Activated CD8-positive, alpha-beta T cell treated with anti-CD3 and anti-CD28 coated beads for 36 hours (primary cell): ENCODE measurements at regions of chr9 and their contacts with region 1.

Region 1: DNA sequence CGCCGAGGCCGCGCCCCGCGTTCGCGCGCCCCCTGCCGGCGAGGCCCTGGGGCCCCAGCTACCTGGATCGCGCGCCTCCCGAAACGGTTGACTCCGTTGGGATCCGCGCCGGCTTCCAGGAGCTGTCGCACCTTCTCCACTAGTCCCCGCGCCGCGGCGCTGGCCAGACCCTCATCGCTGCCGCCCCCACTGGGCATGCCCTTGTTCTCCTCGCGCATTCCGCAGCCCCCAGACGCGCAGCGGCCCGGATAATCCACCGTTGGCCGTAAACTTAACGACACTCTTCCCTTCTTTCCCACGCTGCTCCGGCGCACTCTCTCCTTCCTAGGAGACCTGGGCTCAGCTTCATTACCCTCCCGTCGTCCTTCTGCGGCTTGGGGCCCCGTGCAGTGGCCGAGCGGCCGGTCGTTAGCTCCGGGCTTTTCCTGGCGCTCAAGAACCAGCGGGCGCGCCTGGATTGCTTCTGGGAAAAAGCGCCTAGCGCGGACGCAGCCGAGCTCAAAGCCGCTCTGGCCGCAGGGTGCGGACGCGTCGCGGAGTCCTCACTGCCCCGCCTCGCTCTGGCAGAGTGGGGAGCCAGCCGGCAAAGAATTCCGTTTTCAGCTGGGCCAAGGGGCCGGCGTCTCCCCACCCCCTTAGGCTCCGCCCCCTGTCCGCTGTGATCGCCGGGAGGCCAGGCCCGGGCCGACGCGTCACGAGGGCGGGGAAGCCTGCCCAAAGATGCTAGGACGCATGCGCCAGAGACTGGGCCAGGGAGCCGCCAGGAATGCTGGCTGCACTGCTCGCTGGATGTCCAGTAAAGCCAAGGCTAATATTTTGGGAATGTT is at the start of gene CDKN2B:
- DNase-seq: peak; percentile 71
- ATAC-seq: peak; percentile 89
- H3K4me3 Mint-ChIP-seq: peak within 1 kb of the TSS; percentile 72
- H3K27ac Mint-ChIP-seq: no peak within 1 kb of the TSS
- H3K4me1 Mint-ChIP-seq: peaks cover 21% of the 10 kb centered on the region
- H3K27me3 Mint-ChIP-seq: peaks cover 55% of the 10 kb centered on the region
- CTCF ChIP-seq: peak; percentile 78
- total RNA-seq, gene CDKN2B: not detected

Region 2: DNA sequence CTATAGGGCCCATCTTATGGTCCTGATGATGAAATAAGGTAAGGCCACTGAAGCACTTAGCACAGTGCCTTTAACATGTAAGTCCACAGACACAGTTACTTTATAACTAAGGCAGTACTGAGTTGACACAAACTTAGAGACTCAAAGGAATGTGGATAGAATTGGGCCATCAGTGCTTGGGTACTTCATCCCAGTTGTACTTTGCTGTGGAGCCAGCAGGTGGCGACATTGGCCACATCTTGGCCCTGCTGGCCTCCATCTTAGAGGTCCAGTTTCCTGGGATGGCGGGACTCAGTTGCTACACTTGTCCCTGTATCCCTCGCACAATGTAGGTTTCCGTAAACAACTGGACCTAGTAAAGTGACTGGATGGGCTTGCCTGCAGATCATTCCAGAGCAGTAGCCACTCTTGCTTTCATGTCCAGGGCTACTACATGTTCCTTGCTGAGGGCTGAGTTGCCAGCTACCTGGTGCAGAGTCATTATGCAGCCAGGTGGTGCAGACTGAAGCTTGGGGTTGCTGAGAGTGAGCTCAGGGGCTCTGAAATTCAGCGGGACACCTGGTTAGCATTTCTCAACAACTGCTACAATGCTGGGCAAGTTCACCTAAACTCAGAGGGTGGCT is 195.9 kb before region 1 on chr9:
- CTCF ChIA-PET with region 1: interaction called, 93 read pairs
- POLR2A ChIA-PET with region 1: interaction called, 5 read pairs
- intact Hi-C with region 1: loop called (anchors 1 kb)
- DNase-seq: peak; percentile 72
- ATAC-seq: peak; percentile 71
- H3K4me3 Mint-ChIP-seq: no peak overlapping the region
- H3K27ac Mint-ChIP-seq: peak overlapping the region; percentile 69
- H3K4me1 Mint-ChIP-seq: peaks cover 42% of the 10 kb centered on the region
- H3K27me3 Mint-ChIP-seq: no peaks in the 10 kb centered on the region
- CTCF ChIP-seq: peak; percentile 85

Region 3: DNA sequence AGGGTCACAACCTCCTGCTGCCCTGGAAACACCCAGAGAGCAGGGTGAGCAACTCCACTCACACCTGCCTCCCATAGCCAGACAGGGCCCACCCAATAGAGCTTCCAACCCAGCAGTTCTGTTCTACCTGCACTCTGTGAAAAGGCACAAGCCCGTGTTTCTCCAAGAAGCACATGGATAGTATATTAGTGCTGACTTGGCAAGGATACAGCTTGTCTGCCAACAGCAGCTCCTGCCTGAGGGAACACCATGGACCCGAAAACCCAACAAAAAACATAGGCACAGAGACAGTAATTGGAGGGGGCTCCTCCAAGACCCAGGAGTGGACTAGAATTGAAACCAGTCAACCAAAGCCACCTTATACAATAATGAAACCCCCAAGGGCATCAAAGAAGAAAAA is 63.3 kb before region 1 on chr9:
- CTCF ChIA-PET with region 1: no interaction called
- POLR2A ChIA-PET with region 1: no interaction called
- intact Hi-C with region 1: no loop called
- DNase-seq: no peak
- ATAC-seq: no peak
- H3K4me3 Mint-ChIP-seq: no peak overlapping the region
- H3K27ac Mint-ChIP-seq: no peak overlapping the region
- H3K4me1 Mint-ChIP-seq: no peaks in the 10 kb centered on the region
- H3K27me3 Mint-ChIP-seq: peaks cover 25% of the 10 kb centered on the region
- CTCF ChIP-seq: no peak

Region 4: GRCh38 chr9:21974548-21975409 is 34.2 kb before region 1 on chr9:
- CTCF ChIA-PET with region 1: interaction called, 37 read pairs
- POLR2A ChIA-PET with region 1: interaction called, 3 read pairs
- intact Hi-C with region 1: loop called (anchors 5 kb)
- DNase-seq: peak; percentile 79
- ATAC-seq: peak; percentile 83
- H3K4me3 Mint-ChIP-seq: peak overlapping the region; percentile 78
- H3K27ac Mint-ChIP-seq: no peak overlapping the region
- H3K4me1 Mint-ChIP-seq: peaks cover 15% of the 10 kb centered on the region
- H3K27me3 Mint-ChIP-seq: peaks cover 78% of the 10 kb centered on the region
- CTCF ChIP-seq: no peak

Region 5: DNA sequence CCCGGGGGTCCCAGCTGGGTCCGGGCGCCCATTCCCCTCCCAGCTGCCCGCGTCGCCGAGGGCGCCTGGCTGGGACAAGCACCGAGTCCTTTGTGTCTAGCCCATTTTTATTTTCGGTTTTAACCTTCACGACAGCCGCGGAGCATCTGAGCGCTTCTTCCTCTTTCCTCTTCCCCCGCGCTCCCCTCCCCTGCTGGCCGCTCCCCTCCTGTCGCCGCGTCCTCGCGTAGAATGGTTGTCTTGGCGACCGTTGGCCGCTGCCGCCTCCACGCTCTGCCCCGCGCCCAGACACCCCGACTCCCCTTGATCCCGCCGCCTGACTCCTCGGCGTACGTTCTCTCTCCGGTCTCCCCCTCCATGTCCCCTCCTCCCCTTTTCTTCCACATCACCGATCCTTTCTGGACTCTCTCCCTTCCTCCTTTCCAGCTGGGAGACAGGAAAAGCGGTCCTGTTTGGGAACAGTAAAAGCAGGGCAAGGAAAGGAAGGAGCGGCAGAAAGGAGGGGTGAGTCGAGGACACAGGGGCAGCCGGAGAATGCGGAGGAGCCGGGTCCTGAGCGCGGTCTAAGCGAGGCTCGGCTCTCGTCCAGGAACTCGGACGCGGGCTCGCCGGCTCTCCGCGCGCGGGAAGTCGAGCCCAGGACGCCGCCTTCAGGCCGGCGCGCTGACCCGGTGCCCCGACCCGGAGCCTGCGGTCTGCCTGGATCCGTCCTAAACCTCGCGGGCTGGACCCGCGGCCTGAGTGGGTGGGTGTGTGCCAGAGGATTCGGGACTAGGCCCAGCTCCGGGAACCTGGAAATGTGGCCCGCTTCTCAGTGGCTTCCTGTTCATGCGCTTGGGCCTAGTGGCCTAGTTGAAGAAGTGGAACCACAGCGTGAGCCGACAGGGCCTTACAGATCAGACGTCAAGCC is 13.5 kb before region 1 on chr9:
- CTCF ChIA-PET with region 1: interaction called, 30 read pairs
- POLR2A ChIA-PET with region 1: interaction called, 3 read pairs
- intact Hi-C with region 1: no loop called
- DNase-seq: peak; percentile 85
- ATAC-seq: peak; percentile 80
- H3K4me3 Mint-ChIP-seq: peak overlapping the region; percentile 96
- H3K27ac Mint-ChIP-seq: peak overlapping the region; percentile 95
- H3K4me1 Mint-ChIP-seq: peaks cover 9% of the 10 kb centered on the region
- H3K27me3 Mint-ChIP-seq: peaks cover 42% of the 10 kb centered on the region
- CTCF ChIP-seq: no peak

Region 6: GRCh38 chr9:22030101-22030598 is 21.2 kb after region 1 on chr9:
- CTCF ChIA-PET with region 1: interaction called, 62 read pairs
- POLR2A ChIA-PET with region 1: interaction called, 3 read pairs
- intact Hi-C with region 1: no loop called
- DNase-seq: no peak
- ATAC-seq: no peak
- H3K4me3 Mint-ChIP-seq: no peak overlapping the region
- H3K27ac Mint-ChIP-seq: no peak overlapping the region
- H3K4me1 Mint-ChIP-seq: no peaks in the 10 kb centered on the region
- H3K27me3 Mint-ChIP-seq: peaks cover 1% of the 10 kb centered on the region
- CTCF ChIP-seq: no peak

Region 7: DNA sequence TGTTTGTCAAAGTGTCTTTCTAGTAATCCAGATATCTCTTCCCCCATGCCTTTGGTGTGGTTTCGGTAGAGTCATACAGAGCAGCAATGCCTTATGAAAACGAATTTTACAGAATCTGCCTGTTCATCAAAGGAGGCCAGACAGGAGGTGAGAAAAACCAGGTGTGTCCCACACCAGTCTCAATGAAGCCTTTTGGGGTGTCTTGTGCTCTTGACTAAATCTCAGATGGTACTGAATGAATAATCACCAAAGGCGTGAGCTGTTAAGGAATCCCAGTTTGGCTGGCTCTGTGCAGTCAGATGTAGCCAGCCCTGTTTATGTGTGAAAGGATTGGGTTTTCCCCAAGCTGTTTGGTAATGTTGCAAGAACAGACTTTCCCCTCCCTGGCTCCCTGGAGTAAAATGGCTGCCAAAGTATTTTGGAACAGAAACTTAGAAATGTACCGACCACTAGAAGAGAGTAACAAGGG is 71.0 kb after region 1 on chr9:
- CTCF ChIA-PET with region 1: interaction called, 10 read pairs
- POLR2A ChIA-PET with region 1: no interaction called
- intact Hi-C with region 1: no loop called
- DNase-seq: peak; percentile 82
- ATAC-seq: peak; percentile 95
- H3K4me3 Mint-ChIP-seq: peak overlapping the region; percentile 16
- H3K27ac Mint-ChIP-seq: peak overlapping the region; percentile 72
- H3K4me1 Mint-ChIP-seq: peaks cover 43% of the 10 kb centered on the region
- H3K27me3 Mint-ChIP-seq: peaks cover 26% of the 10 kb centered on the region
- CTCF ChIP-seq: no peak

Region 8: GRCh38 chr9:22169727-22170503 is 161.0 kb after region 1 on chr9:
- CTCF ChIA-PET with region 1: no interaction called
- POLR2A ChIA-PET with region 1: no interaction called
- intact Hi-C with region 1: no loop called
- DNase-seq: no peak
- ATAC-seq: no peak
- H3K4me3 Mint-ChIP-seq: no peak overlapping the region
- H3K27ac Mint-ChIP-seq: no peak overlapping the region
- H3K4me1 Mint-ChIP-seq: no peaks in the 10 kb centered on the region
- H3K27me3 Mint-ChIP-seq: peaks cover 7% of the 10 kb centered on the region
- CTCF ChIP-seq: no peak

Region 9: GRCh38 chr9:22203371-22204138 is 194.6 kb after region 1 on chr9:
- CTCF ChIA-PET with region 1: no interaction called
- POLR2A ChIA-PET with region 1: no interaction called
- intact Hi-C with region 1: no loop called
- DNase-seq: no peak
- ATAC-seq: peak; percentile 73
- H3K4me3 Mint-ChIP-seq: no peak overlapping the region
- H3K27ac Mint-ChIP-seq: no peak overlapping the region
- H3K4me1 Mint-ChIP-seq: peaks cover 12% of the 10 kb centered on the region
- H3K27me3 Mint-ChIP-seq: peaks cover 8% of the 10 kb centered on the region
- CTCF ChIP-seq: no peak

Region 10: GRCh38 chr9:22238809-22239684 is 230.1 kb after region 1 on chr9:
- CTCF ChIA-PET with region 1: interaction called, 11 read pairs
- POLR2A ChIA-PET with region 1: no interaction called
- intact Hi-C with region 1: no loop called
- DNase-seq: no peak
- ATAC-seq: no peak
- H3K4me3 Mint-ChIP-seq: no peak overlapping the region
- H3K27ac Mint-ChIP-seq: no peak overlapping the region
- H3K4me1 Mint-ChIP-seq: peaks cover 53% of the 10 kb centered on the region
- H3K27me3 Mint-ChIP-seq: peaks cover 5% of the 10 kb centered on the region
- CTCF ChIP-seq: peak; percentile 34